ENCODE measurements at regions of chr17 and their contacts with region 1.

Region 1: GRCh38 chr17:46266656-46267544 is 28.0 kb upstream of the LRRC37A start:
- DNase-seq: peak; percentile 56 to 98 (median 82)

Region 2: DNA sequence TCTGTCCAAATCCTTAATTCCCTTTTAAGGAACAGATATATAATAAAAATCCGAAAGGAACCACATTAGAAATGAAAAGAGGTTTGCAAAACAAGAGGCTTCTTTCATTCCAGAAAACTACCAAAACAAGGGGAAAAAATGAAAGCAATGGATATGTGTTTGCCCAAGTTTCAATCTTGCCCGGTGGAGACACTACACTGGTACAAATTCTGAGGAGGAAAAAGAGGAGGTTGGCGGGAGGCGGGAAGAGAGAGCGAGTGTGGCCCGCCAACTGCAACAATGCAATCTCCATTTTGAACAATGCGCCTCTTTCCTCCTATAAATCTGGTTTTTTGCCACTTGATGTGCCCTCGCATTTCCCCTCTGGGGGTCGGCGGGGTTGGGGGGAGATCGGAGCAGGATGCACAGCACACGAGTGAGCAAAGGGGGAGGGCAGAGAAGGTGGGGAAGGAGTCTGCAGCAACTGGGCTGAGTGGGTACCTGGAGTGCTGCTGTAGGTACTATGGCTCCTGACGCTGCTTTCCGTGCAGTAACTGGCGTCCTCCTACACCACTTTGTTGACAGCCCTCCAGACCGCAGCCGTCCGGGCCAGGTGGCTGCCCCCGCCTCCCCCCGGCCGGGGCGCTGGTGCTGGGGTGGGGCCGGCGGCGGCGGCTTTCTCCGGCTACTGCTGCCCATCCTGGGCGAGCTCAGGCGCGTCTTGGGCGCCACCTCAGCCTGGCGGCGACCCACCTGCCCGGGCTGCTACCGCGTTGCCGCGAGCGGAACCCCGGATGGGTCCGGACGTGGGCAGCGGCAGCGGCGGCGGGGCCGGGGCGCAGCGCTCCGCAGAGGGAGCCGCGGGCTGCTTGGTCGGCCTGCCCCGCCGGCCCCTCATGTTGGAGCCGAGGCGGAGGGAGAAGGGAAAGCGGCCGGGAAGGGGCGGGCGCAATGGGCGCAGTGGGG is 682.5 kb before region 1 on chr17:
- intact Hi-C with region 1: loop called (anchors 5 kb)
- DNase-seq: peak; percentile 24 to 95 (median 62)

Region 3: DNA sequence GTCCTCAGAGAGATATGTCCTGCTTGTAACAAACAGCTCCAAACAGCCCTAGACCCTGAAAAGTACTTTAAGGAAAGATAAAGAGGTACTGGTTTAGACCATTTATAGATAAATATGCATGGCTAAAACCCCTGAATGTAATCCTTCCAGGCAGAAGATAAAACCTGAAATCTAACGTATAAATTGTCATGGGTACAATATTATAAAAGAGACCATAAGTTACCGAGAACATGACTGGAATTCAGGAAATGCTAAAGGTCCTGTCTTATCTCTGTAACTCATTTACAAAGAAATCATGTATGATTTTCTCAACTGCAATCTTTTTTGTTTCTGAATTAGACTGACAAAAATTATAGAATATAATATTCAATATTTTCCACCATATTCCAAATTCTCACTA is 64.5 kb before region 1 on chr17:
- intact Hi-C with region 1: no loop called
- DNase-seq: no peak

Measured in posterior cingulate gyrus (tissue), 11 donors.